ENCODE measurements at regions of chr3 and their contacts with region 1.

Region 1: GRCh38 chr3:183884427-183885296 is at the start of gene PARL:
- DNase-seq: peak; percentile 94
- ATAC-seq: peak; percentile 99
- H3K4me3 ChIP-seq: peak within 1 kb of the TSS; percentile 98
- H3K27ac ChIP-seq: peak within 1 kb of the TSS; percentile 35
- H3K4me1 ChIP-seq: peaks cover 12% of the 10 kb centered on the region; the same call in 1 of the 2 replicates
- H3K27me3 ChIP-seq: no peaks in the 10 kb centered on the region
- CTCF ChIP-seq: peak; percentile 91
- total RNA-seq, gene PARL: 66.3 and 69.2 TPM in 2 replicates

Region 2: DNA sequence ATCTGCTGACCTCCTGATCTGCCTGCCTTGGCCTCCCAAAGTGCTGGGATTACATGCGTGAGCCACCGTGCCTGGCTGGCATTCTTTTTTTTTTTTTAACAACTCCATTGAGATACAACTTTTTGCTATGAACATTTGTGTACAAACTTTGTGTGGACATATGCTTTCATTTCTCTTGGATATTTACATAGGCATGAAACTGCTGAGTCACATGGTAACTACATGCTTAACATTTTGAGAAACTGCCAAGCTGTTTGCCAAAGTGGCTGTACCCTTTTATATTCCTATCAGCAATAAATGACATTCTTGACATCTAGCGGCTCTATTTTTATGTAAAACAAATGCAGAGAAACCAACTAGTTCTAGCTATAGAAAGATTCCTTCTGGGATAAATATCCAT is 195.8 kb before region 1 on chr3:
- CTCF ChIA-PET with region 1: no interaction called
- POLR2A ChIA-PET with region 1: no interaction called
- intact Hi-C with region 1: no loop called
- DNase-seq: peak; percentile 51
- ATAC-seq: peak; percentile 51
- H3K4me3 ChIP-seq: no peak overlapping the region
- H3K27ac ChIP-seq: no peak overlapping the region
- H3K4me1 ChIP-seq: no peaks in the 10 kb centered on the region
- H3K27me3 ChIP-seq: no peaks in the 10 kb centered on the region
- CTCF ChIP-seq: no peak

Region 3: GRCh38 chr3:183825456-183826161 is 59.1 kb before region 1 on chr3 and contains the start of gene MAP6D1:
- CTCF ChIA-PET with region 1: no interaction called
- POLR2A ChIA-PET with region 1: no interaction called
- intact Hi-C with region 1: loop called (anchors 1 kb)
- DNase-seq: peak; percentile 54
- ATAC-seq: peak; percentile 70
- H3K4me3 ChIP-seq: peak within 1 kb of the TSS; percentile 92
- H3K27ac ChIP-seq: no peak within 1 kb of the TSS
- H3K4me1 ChIP-seq: peaks cover 8% of the 10 kb centered on the region
- H3K27me3 ChIP-seq: no peaks in the 10 kb centered on the region
- CTCF ChIP-seq: peak; percentile 46
- total RNA-seq, gene MAP6D1: 12.4 and 12.6 TPM in 2 replicates

Region 4: GRCh38 chr3:183924956-183925355 is 40.3 kb after region 1 on chr3:
- CTCF ChIA-PET with region 1: no interaction called
- POLR2A ChIA-PET with region 1: no interaction called
- intact Hi-C with region 1: loop called (anchors 1 kb)
- DNase-seq: peak; percentile 97
- ATAC-seq: peak; percentile 98
- H3K4me3 ChIP-seq: no peak overlapping the region; the same call in 1 of the 2 replicates
- H3K27ac ChIP-seq: peak overlapping the region; percentile 97
- H3K4me1 ChIP-seq: peaks cover 24% of the 10 kb centered on the region
- H3K27me3 ChIP-seq: no peaks in the 10 kb centered on the region
- CTCF ChIP-seq: no peak

Region 5: DNA sequence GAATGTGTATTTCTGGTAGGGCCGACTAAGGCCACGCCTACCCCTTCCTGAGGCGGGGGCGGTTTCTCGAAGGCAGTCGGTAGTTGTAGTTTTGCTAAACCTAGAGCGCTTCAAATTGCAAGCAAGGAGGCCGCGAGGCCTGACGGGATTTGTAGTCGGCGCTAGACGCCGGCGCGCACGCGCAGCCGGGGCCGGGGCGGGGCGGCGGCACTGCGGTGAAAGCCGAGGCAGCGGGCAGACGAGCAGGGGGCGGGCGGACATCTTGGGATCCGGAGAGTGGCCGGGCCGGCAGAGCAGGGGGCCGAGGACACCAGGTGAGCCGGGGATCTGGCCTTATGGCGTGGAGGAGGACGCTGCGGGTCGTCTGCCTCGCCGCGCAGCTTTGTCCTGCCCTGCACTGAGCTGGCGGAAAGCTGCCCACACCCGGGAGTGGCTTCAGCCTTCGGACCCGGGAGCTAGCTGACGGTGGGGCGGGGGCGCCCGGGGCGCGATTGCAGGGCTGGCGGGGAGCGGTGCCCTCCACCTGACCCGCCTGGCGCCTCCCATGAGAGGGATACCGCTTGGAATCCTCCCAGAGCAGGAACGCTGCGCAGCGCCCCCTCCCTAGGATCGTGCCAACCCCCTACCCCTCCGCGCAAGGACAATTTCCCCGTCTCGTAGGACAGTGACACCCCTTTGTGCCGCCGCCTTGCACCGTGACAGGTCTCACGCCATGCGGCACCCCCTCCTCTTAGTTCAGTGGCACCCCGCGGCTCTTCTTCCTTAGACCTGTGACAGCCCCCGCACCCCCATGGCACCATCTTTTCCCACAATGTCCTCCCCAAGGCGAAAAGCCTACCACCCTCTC is 290.2 kb after region 1 on chr3 and contains the start of gene AP2M1:
- CTCF ChIA-PET with region 1: no interaction called
- POLR2A ChIA-PET with region 1: interaction called, 37 read pairs
- intact Hi-C with region 1: no loop called
- DNase-seq: peak; percentile 99
- ATAC-seq: peak; percentile 86
- H3K4me3 ChIP-seq: peak within 1 kb of the TSS; percentile 89
- H3K27ac ChIP-seq: peak within 1 kb of the TSS; percentile 62
- H3K4me1 ChIP-seq: peaks cover 54% of the 10 kb centered on the region
- H3K27me3 ChIP-seq: no peaks in the 10 kb centered on the region
- CTCF ChIP-seq: peak; percentile 19; the same call in 1 of the 2 replicates
- total RNA-seq, gene AP2M1: 522 and 538 TPM in 2 replicates

Region 6: DNA sequence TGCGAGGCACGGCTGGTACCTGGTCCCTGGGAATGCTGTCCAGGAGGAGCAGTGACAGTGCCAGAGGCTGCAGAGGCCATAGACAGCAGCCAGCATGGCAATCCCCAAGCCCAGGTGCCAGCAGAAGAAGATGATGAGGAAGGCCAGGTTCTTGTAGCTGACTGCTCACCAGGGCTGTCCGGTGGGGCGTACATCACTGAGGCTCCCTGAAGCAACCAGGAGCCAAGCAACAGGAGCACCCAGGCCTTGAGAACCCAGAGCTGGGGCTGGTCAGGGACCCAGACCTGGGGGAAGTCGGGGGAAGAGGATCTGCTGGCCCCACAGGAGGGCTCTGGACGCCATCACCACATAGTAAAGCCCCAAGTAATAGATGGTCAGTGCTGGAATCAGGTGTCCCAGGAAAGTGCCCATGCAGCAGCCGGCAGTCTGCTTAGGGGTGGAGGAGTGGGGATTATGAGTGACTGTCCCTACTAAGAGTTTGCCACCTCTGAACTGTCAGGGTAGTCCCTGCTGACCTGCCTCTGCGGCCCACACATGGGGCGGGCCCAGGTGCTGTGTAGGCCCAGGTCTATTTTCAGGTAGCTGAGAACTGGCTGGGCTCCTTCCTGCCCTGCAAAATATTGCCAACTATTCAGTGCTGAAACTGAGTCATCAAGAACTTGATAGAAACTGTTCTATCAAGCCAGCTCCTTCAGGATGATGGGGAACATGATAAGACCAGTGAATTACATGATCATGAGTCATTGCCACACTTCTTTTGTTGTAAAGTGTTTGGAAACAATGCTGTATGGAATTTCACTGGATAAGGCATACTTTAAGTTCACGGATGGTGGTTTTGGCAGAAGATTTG is 563.9 kb after region 1 on chr3:
- CTCF ChIA-PET with region 1: no interaction called
- POLR2A ChIA-PET with region 1: no interaction called
- intact Hi-C with region 1: no loop called
- DNase-seq: peak; percentile 91
- ATAC-seq: peak; percentile 91
- H3K4me3 ChIP-seq: no peak overlapping the region
- H3K27ac ChIP-seq: no peak overlapping the region
- H3K4me1 ChIP-seq: peaks cover 13% of the 10 kb centered on the region
- H3K27me3 ChIP-seq: no peaks in the 10 kb centered on the region
- CTCF ChIP-seq: no peak

Measured in PC-3 (cell line).